Activated CD4-positive, alpha-beta memory T cell treated with anti-CD3 and anti-CD28 coated beads, Interleukin-2, amount 10 ng/mL, durations not matched to agents 7 days and 5 days (primary cell): ENCODE measurements at regions of chr19 and their contacts with region 1.

Region 1: DNA sequence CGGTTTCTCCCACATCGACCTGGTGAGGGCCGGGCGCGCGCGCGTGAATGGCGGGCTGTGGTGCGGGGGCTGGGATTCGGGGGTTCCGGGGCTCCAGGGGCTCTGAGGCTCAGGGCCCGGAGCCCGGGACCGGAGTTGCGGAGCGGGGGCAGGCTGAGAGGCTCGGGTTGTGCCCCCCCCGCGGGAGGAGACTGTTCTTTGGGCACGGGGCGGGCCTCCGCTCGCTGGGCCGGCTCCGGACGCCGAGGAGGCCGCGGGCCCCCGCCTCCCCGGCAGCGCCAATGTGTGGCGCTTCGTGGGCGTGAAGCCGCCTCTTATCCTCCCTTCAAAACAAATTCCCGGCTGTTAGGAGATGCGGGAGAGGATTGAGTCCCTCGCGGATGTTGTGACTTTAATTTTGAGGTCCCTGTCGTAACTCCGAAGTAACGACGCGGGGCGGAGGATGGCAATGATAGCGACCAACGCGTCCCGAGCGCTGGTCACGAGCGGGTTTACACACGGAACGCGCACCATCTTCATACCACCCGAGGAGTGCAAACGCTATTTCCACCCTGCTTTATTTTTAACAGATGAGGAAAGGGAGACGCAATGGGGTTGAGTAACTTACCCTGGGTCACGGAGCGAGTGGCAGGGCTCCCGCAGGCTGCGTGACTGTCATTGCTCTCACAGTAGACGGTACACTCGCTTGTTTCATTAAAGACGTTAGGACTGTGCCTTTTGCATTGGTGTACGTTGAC is 536 bp downstream of the UBA2 start:
- DNase-seq: peak; percentile 51
- H3K4me3 Mint-ChIP-seq: peak overlapping the region; percentile 97
- H3K27ac Mint-ChIP-seq: peak overlapping the region; percentile 90
- H3K4me1 Mint-ChIP-seq: peaks cover 35% of the 10 kb centered on the region
- H3K27me3 Mint-ChIP-seq: no peaks in the 10 kb centered on the region

Region 2: DNA sequence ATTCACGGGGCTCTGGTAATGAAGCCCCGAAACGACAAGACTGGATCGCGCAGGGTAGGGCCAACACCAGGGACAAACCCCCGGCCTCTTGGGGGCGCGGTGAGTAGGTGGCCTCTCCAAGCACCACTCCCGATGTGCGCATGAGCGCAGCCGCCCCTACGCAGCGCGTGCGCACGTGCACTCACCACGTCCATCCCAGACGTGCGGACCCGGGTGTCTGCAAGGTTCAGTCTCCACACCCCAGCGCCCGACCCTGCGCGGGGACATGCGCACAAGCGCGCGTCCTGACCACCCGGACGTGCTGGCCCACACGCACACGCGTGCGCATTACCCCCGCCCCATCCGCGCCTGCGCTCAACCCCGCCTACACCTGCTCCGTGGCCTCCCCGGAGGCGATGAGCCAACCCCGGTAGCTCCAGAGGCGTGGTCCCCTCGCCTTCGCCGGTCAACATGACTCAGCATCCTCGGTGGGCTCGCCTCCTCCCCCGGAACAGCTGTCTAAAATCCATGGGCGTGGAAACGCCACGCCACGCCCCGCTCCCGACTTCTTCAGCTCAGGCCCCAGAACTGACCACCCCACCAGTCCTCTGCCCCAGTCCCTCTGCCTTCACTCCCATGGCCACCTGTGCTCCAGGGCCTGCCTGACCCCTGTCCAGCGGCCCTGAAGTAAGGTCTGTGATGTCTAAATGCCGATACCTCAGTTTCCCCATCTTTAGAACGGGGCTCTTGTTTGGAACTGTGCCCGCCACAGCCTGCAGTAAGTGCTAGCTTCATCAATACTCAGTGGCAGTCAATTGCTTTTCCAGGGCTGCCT is 69.4 kb before region 1 on chr19:
- CTCF ChIA-PET with region 1: interaction called, 5 read pairs
- POLR2A ChIA-PET with region 1: interaction called, 30 read pairs
- DNase-seq: peak; percentile 98
- H3K4me3 Mint-ChIP-seq: peak overlapping the region; percentile 83
- H3K27ac Mint-ChIP-seq: peak overlapping the region; percentile 90
- H3K4me1 Mint-ChIP-seq: peaks cover 50% of the 10 kb centered on the region
- H3K27me3 Mint-ChIP-seq: no peaks in the 10 kb centered on the region

Region 3: GRCh38 chr19:34364830-34365462 is 63.8 kb before region 1 on chr19 and contains the start of gene GPI:
- CTCF ChIA-PET with region 1: interaction called, 5 read pairs
- POLR2A ChIA-PET with region 1: interaction called, 30 read pairs
- DNase-seq: peak; percentile 74
- H3K4me3 Mint-ChIP-seq: peak within 1 kb of the TSS; percentile 95
- H3K27ac Mint-ChIP-seq: peak within 1 kb of the TSS; percentile 88
- H3K4me1 Mint-ChIP-seq: peaks cover 67% of the 10 kb centered on the region
- H3K27me3 Mint-ChIP-seq: no peaks in the 10 kb centered on the region
- total RNA-seq, gene GPI: 658 to 662 TPM

Region 4: GRCh38 chr19:34404109-34404897 is 24.4 kb before region 1 on chr19 and contains the start of gene PDCD2L:
- CTCF ChIA-PET with region 1: interaction called, 8 read pairs
- POLR2A ChIA-PET with region 1: interaction called, 26 read pairs
- DNase-seq: peak; percentile 93
- H3K4me3 Mint-ChIP-seq: peak within 1 kb of the TSS; percentile 88
- H3K27ac Mint-ChIP-seq: peak within 1 kb of the TSS; percentile 70
- H3K4me1 Mint-ChIP-seq: peaks cover 18% of the 10 kb centered on the region
- H3K27me3 Mint-ChIP-seq: no peaks in the 10 kb centered on the region
- total RNA-seq, gene PDCD2L: 8.0 to 9.7 TPM

Region 5: GRCh38 chr19:34468409-34468808 is 39.7 kb after region 1 on chr19:
- CTCF ChIA-PET with region 1: no interaction called
- POLR2A ChIA-PET with region 1: no interaction called
- DNase-seq: no peak
- H3K4me3 Mint-ChIP-seq: no peak overlapping the region
- H3K27ac Mint-ChIP-seq: no peak overlapping the region
- H3K4me1 Mint-ChIP-seq: no peaks in the 10 kb centered on the region
- H3K27me3 Mint-ChIP-seq: no peaks in the 10 kb centered on the region